WTC11 (cell line): ENCODE measurements at regions of chrX and their contacts with region 1.

Region 1: GRCh38 chrX:68732906-68733493 is 85.5 kb downstream of the STARD8 start:
- DNase-seq: peak; percentile 78
- ATAC-seq: peak; percentile 85
- H3K4me3 Mint-ChIP-seq: no peak overlapping the region
- H3K27ac Mint-ChIP-seq: no peak overlapping the region
- H3K4me1 Mint-ChIP-seq: 0 out of 2 replicates have a peak, but pooled peaks cover 3% of the 10 kb centered on the region
- H3K27me3 Mint-ChIP-seq: no peaks in the 10 kb centered on the region; the same call in 1 of the 2 replicates
- CTCF ChIP-seq: peak; percentile 49; the same call in 1 of the 2 replicates

Region 2: DNA sequence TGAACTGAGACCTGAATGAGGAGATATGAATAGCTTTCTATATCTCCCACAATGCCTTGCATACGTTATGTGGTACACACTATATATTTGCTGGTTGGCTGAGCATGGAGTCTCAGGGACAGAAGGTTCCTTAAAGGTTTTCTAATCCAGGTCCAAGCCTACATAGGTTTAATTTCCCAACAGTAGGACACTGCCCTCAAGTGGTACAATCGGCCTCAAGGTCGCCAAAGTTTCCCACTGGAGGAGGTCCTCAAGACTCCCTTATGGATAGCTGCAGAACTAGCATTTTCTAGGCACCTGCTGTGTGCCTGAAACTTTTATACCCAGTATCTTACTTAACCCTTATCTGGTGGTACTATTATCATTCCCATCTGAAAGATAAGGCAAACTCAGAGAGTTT is 74.8 kb after region 1 on chrX:
- CTCF ChIA-PET with region 1: interaction called, 35 read pairs
- POLR2A ChIA-PET with region 1: no interaction called
- DNase-seq: peak; percentile 25
- ATAC-seq: 0 out of 2 replicates have a peak, but pooled peaks have one; percentile 55
- H3K4me3 Mint-ChIP-seq: no peak overlapping the region
- H3K27ac Mint-ChIP-seq: no peak overlapping the region
- H3K4me1 Mint-ChIP-seq: no peaks in the 10 kb centered on the region; the same call in 1 of the 2 replicates
- H3K27me3 Mint-ChIP-seq: peaks cover 4% of the 10 kb centered on the region; the same call in 1 of the 2 replicates
- CTCF ChIP-seq: no peak

Region 3: GRCh38 chrX:68822641-68823410 is 89.8 kb after region 1 on chrX:
- CTCF ChIA-PET with region 1: interaction called, 18 read pairs
- POLR2A ChIA-PET with region 1: no interaction called
- DNase-seq: no peak
- ATAC-seq: peak; percentile 96
- H3K4me3 Mint-ChIP-seq: no peak overlapping the region
- H3K27ac Mint-ChIP-seq: no peak overlapping the region
- H3K4me1 Mint-ChIP-seq: 0 out of 2 replicates have a peak, but pooled peaks cover 2% of the 10 kb centered on the region
- H3K27me3 Mint-ChIP-seq: peaks cover 56% of the 10 kb centered on the region
- CTCF ChIP-seq: no peak